ENCODE measurements at regions of chr17 and their contacts with region 1.

Region 1: DNA sequence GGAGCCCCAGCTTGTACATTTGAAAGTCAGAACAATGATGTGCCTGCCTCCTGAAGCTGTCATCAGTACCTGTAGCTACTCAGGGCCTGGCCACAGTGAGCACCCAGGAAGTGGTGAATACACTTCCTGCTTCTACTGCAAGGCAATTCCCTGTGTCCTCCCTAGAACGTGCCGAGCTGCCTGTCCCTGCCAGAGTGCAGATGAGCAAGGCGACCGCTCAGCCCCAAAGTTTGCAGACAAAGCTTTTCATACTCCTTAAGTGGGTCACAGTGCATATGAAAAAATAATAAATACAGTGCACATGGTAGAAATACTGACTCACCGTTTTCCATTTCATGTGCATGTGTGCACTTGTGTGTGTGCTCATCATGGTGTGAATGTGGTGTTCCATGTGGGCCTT is 77.3 kb downstream of the MPRIP start:
- DNase-seq: peak; percentile 60
- CTCF ChIP-seq: no peak

Region 2: DNA sequence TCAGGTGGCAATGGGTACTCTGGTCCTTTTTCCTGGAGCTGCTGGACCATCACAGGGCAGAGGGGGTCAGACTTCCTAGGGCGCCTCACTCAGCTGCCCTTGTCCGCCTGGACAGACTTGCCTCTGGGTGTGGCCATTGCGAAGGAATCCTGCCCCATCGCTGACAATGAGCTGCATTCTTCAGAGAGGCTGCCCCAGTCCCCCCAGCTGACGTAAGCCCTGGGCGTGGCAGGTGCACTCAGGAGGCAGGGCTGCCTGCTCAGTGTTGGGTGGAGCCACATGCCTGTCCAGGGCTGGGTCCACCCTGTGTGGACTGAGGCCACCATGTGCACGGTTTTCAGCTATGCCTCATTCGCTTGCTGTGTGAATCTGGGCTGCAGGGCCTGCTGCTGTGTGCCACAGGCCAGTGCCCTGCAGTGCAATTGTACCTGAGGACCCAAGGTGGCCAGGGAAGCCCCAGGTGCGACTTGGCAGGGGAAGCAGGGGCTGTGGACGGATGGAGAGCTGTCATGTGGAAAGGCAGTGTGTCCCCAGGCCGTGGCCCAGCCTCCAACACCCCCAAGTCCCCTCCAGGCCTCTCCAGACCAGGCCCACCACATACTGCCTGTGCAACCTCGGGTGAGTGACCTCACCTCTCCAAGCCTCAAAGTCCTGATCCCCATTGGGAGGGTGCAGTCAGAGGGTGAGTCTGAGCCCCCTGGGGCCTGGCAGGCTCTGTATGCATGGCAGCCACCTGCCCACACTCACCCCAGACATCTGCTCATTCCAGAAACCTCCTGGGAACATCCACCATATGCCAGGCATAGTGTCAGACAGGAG is 91.3 kb before region 1 on chr17:
- in situ Hi-C with region 1: no loop called
- DNase-seq: no peak
- CTCF ChIP-seq: no peak

Region 3: DNA sequence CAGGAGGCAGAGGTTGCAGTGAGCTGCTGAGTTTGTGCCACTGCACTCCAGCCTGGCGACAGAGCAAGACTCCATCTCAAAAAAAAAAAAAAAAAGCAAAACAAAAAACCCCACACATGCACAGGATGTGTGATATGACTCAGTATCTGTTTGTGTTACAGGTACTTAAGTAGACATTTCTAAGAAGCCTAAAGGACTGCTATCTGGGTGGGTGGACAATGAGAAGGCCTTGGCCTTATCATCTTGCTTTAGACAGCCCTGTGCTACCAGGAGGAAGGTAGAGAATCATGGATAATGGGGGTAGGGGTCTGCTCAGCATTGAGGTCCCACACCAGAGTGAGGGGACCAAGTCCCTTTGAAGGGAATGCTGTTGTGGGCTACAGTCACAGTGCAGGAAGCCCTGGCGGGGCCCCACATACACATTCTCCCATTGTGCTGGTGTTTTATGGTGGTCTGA is 59.9 kb after region 1 on chr17:
- in situ Hi-C with region 1: loop called (anchors 10 kb)
- DNase-seq: peak; percentile 83
- CTCF ChIP-seq: no peak